Sigmoid colon (tissue), 7 donors: ENCODE measurements at regions of chr20 and their contacts with region 1.

Region 1: DNA sequence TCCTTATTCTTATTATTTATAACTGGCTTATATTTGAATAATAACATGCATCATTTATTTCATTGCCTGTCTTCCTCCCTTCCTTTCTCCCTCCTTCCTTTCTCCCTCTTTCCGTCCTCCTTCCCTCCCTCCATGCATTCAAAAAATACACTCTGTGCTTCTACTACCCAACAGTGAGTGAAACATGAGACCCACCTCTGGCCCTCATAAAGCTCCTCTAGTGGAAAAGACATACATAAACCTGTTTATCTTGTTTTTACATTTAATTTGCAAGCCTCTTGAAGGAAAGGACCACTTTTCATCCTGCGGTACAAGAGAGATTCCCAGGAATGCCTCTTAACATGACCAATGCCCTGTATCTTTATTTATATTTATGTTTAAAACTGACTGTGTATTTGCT is 21.8 kb upstream of the ISM1 start:
- DNase-seq: no peak
- H3K4me3 ChIP-seq: no peak overlapping the region
- H3K27ac ChIP-seq: no peak overlapping the region
- H3K4me1 ChIP-seq: no peaks in the 10 kb centered on the region
- H3K27me3 ChIP-seq: no peaks in the 10 kb centered on the region
- CTCF ChIP-seq: no peak
- EP300 ChIP-seq: no peak
- POLR2A ChIP-seq: no peak

Region 2: DNA sequence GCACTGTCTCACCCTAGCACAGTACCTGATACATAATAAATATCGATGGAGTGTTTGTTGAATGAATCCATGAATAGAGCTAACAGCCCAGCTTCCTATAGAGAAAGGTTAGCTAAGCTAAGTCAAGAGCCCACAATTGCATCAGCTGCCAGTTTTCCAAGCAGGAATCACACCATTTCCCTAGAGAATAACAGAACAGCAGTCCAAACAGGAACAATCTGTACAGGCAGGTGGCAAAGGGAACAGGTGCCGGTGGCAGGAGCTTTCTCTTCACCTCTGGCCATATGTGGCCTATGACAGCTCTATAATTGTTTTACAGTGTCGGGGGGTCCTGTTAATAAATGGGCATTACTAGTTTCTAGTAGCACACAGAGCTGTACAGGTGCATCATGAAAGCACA is 60.6 kb after region 1 on chr20:
- intact Hi-C with region 1: loop called (anchors 10 kb)
- DNase-seq: no peak
- H3K4me3 ChIP-seq: no peak overlapping the region
- H3K27ac ChIP-seq: no peak overlapping the region
- H3K4me1 ChIP-seq: peaks cover 0 to 12% (median 7%) of the 10 kb centered on the region in 4 donors
- H3K27me3 ChIP-seq: no peaks in the 10 kb centered on the region
- CTCF ChIP-seq: no peak
- EP300 ChIP-seq: no peak
- POLR2A ChIP-seq: no peak